ENCODE measurements at regions of chr9 and their contacts with region 1.

Region 1: GRCh38 chr9:32968101-32969011 is 33.1 kb downstream of the APTX start:
- DNase-seq: peak; percentile 57
- ATAC-seq: peak; percentile 36; the same call in 1 of the 2 replicates
- H3K4me3 ChIP-seq: no peak overlapping the region
- H3K27ac ChIP-seq: no peak overlapping the region
- H3K4me1 ChIP-seq: peaks cover 3% of the 10 kb centered on the region; the same call in 1 of the 2 replicates
- H3K27me3 ChIP-seq: no peaks in the 10 kb centered on the region
- CTCF ChIP-seq: peak; percentile 84
- POLR2A ChIP-seq: no peak
- RAD21 ChIP-seq: peak; percentile 66

Region 2: DNA sequence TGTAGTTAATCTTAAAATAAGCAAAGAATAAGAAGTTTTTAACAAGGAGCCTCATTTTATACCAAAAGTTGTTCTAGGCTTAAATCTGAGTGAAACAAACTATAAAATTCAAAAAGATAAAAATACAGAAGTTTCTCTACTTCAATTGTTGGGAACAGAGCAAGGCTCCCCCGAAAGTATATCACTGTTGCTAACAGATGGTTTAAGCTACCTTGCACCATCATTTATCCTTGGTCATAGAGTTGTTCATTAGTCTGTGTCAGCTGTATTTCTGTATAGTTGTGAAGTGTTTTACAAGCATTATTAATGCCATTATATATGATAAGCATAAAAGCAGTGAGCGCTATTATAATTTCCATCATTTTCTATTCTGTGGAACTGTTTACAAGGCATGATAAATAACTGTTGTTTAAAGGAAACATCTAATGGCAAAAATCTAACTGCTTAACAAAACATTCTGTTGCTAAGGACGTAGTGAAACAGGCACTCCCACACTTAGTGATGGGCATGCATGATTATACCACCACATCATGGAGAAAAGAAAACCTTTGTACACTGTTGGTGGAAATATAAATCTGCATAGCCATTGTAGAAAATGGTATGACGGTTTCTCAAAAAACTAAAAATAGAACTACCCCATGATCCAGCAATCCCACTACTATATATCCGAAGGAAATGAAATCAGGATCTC is 607.2 kb before region 1 on chr9:
- CTCF ChIA-PET with region 1: no interaction called
- POLR2A ChIA-PET with region 1: no interaction called
- dilution Hi-C with region 1: no loop called
- in situ Hi-C with region 1: no loop called
- intact Hi-C with region 1: loop called (anchors 5 kb)
- DNase-seq: no peak
- ATAC-seq: no peak
- H3K4me3 ChIP-seq: no peak overlapping the region
- H3K27ac ChIP-seq: no peak overlapping the region
- H3K4me1 ChIP-seq: no peaks in the 10 kb centered on the region
- H3K27me3 ChIP-seq: no peaks in the 10 kb centered on the region
- CTCF ChIP-seq: no peak
- POLR2A ChIP-seq: no peak
- RAD21 ChIP-seq: no peak

Region 3: GRCh38 chr9:32371279-32371678 is 597.1 kb before region 1 on chr9:
- CTCF ChIA-PET with region 1: no interaction called
- POLR2A ChIA-PET with region 1: no interaction called
- dilution Hi-C with region 1: no loop called
- in situ Hi-C with region 1: loop called (anchors 5 kb)
- intact Hi-C with region 1: no loop called
- DNase-seq: no peak
- ATAC-seq: no peak
- H3K4me3 ChIP-seq: no peak overlapping the region
- H3K27ac ChIP-seq: no peak overlapping the region
- H3K4me1 ChIP-seq: no peaks in the 10 kb centered on the region
- H3K27me3 ChIP-seq: no peaks in the 10 kb centered on the region
- CTCF ChIP-seq: no peak
- POLR2A ChIP-seq: no peak
- RAD21 ChIP-seq: no peak

Region 4: GRCh38 chr9:32579706-32580331 is 388.5 kb before region 1 on chr9:
- CTCF ChIA-PET with region 1: interaction called, 26 read pairs
- POLR2A ChIA-PET with region 1: no interaction called
- dilution Hi-C with region 1: no loop called
- in situ Hi-C with region 1: loop called (anchors 5 kb)
- intact Hi-C with region 1: loop called (anchors 1 kb)
- DNase-seq: peak; percentile 53
- ATAC-seq: peak; percentile 65; the same call in 1 of the 2 replicates
- H3K4me3 ChIP-seq: no peak overlapping the region
- H3K27ac ChIP-seq: no peak overlapping the region
- H3K4me1 ChIP-seq: 0 out of 2 replicates have a peak, but pooled peaks cover 3% of the 10 kb centered on the region
- H3K27me3 ChIP-seq: peaks cover 2% of the 10 kb centered on the region; the same call in 1 of the 2 replicates
- CTCF ChIP-seq: peak; percentile 89
- POLR2A ChIP-seq: no peak
- RAD21 ChIP-seq: peak; percentile 82

Region 5: GRCh38 chr9:32589083-32589723 is 379.2 kb before region 1 on chr9:
- CTCF ChIA-PET with region 1: interaction called, 11 read pairs
- POLR2A ChIA-PET with region 1: no interaction called
- dilution Hi-C with region 1: no loop called
- in situ Hi-C with region 1: loop called (anchors 5 kb)
- intact Hi-C with region 1: loop called (anchors 1 kb)
- DNase-seq: peak; percentile 57
- ATAC-seq: peak; percentile 87
- H3K4me3 ChIP-seq: no peak overlapping the region
- H3K27ac ChIP-seq: no peak overlapping the region
- H3K4me1 ChIP-seq: no peaks in the 10 kb centered on the region
- H3K27me3 ChIP-seq: peaks cover 3% of the 10 kb centered on the region; the same call in 1 of the 2 replicates
- CTCF ChIP-seq: peak; percentile 55
- POLR2A ChIP-seq: no peak
- RAD21 ChIP-seq: peak; percentile 52

Measured in IMR-90 (cell line).